HepG2 (cell line): ENCODE measurements at regions of chr1 and their contacts with region 1.

Region 1: DNA sequence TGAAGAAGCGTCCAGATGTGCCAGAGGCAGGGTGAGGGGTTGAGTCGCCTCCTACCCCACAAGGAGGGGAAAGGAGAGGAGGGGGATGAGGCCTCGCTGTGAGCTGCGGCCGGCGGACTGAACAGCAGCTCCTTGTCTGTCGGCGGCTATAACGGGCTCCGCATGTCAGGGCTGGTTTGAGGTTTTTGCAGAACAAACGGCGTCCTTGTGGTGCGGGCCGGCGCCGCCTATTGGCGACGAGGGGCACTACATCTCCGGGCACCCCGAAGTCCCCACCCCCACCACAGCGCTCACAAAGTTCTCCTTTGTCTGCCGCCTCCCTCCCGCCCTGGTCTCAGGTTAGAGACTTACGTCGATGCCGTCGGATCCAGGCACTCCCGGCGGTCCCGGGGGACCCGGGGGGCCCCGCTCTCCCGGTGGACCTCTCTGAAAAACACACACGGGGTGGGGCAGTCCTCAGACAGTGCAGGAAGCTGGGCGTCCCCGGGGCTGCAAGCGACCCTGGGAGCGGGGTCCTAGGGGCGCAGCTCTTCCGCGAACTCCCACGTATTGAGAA is 1.8 kb downstream of the COL9A2 start:
- DNase-seq: peak; percentile 83
- ATAC-seq: peak; percentile 66
- H3K4me3 ChIP-seq: peak overlapping the region; percentile 58 to 93 (median 89); a peak in 5 of 6 replicates
- H3K27ac ChIP-seq: peak overlapping the region; percentile 82
- H3K4me1 ChIP-seq: peaks cover 47% of the 10 kb centered on the region
- H3K27me3 ChIP-seq: peaks cover 0 to 11% of the 10 kb centered on the region in 2 experiments; a peak in 1 of 5 replicates
- CTCF ChIP-seq: peak; percentile 92
- EP300 ChIP-seq: peak in 1 of 2 experiments; percentile 19; a peak in 1 of 4 replicates
- POLR2A ChIP-seq: peak; percentile 75 to 76
- RAD21 ChIP-seq: peak; percentile 79

Region 2: GRCh38 chr1:40143891-40144575 is 171.3 kb before region 1 on chr1:
- CTCF ChIA-PET with region 1: no interaction called
- POLR2A ChIA-PET with region 1: no interaction called
- in situ Hi-C with region 1: no loop called
- intact Hi-C with region 1: loop called (anchors 1 kb)
- DNase-seq: peak; percentile 64
- ATAC-seq: peak; percentile 95
- H3K4me3 ChIP-seq: no peak overlapping the region
- H3K27ac ChIP-seq: no peak overlapping the region
- H3K4me1 ChIP-seq: peaks cover 19% of the 10 kb centered on the region
- H3K27me3 ChIP-seq: peaks cover 0 to 10% of the 10 kb centered on the region in 2 experiments; a peak in 2 of 5 replicates
- CTCF ChIP-seq: peak; percentile 82
- EP300 ChIP-seq: no peak
- POLR2A ChIP-seq: no peak
- RAD21 ChIP-seq: peak; percentile 65

Region 3: GRCh38 chr1:40257688-40258444 is 57.5 kb before region 1 on chr1 and contains the start of gene ZMPSTE24:
- CTCF ChIA-PET with region 1: no interaction called
- POLR2A ChIA-PET with region 1: interaction called, 13 read pairs
- in situ Hi-C with region 1: no loop called
- intact Hi-C with region 1: loop called (anchors 10 kb)
- DNase-seq: peak; percentile 95
- ATAC-seq: peak; percentile 98
- H3K4me3 ChIP-seq: peak within 1 kb of the TSS; percentile 92 to 99 (median 97)
- H3K27ac ChIP-seq: peak within 1 kb of the TSS; percentile 98
- H3K4me1 ChIP-seq: peaks cover 17% of the 10 kb centered on the region
- H3K27me3 ChIP-seq: no peaks in the 10 kb centered on the region; a peak in 1 of 5 replicates
- CTCF ChIP-seq: 0 out of 2 replicates have a peak, but pooled peaks have one; percentile 27
- EP300 ChIP-seq: peak in 1 of 2 experiments; percentile 52; a peak in 3 of 4 replicates
- POLR2A ChIP-seq: peak; percentile 74 to 81
- RAD21 ChIP-seq: peak; percentile 43
- total RNA-seq, gene ZMPSTE24: 43.1 and 60.2 TPM in 2 replicates

Region 4: GRCh38 chr1:40373338-40374283 is 58.3 kb after region 1 on chr1 and contains the start of gene SMAP2:
- CTCF ChIA-PET with region 1: no interaction called
- POLR2A ChIA-PET with region 1: interaction called, 12 read pairs
- in situ Hi-C with region 1: no loop called
- intact Hi-C with region 1: no loop called
- DNase-seq: peak; percentile 91
- ATAC-seq: peak; percentile 94
- H3K4me3 ChIP-seq: peak within 1 kb of the TSS; percentile 88 to 94 (median 93)
- H3K27ac ChIP-seq: peak within 1 kb of the TSS; percentile 76
- H3K4me1 ChIP-seq: peaks cover 37% of the 10 kb centered on the region
- H3K27me3 ChIP-seq: no peaks in the 10 kb centered on the region; a peak in 1 of 5 replicates
- CTCF ChIP-seq: no peak
- EP300 ChIP-seq: no peak
- POLR2A ChIP-seq: peak; percentile 32 to 82; a peak in 3 of 4 replicates
- RAD21 ChIP-seq: peak; percentile 35; the same call in 1 of the 2 replicates
- total RNA-seq, gene SMAP2: 19.0 and 21.2 TPM in 2 replicates

Region 5: GRCh38 chr1:40385437-40386358 is 70.4 kb after region 1 on chr1:
- CTCF ChIA-PET with region 1: no interaction called
- POLR2A ChIA-PET with region 1: interaction called, 23 read pairs
- in situ Hi-C with region 1: no loop called
- intact Hi-C with region 1: no loop called
- DNase-seq: no peak
- ATAC-seq: no peak
- H3K4me3 ChIP-seq: no peak overlapping the region
- H3K27ac ChIP-seq: peak overlapping the region; percentile 81
- H3K4me1 ChIP-seq: peaks cover 92% of the 10 kb centered on the region
- H3K27me3 ChIP-seq: no peaks in the 10 kb centered on the region
- CTCF ChIP-seq: no peak
- EP300 ChIP-seq: no peak
- POLR2A ChIP-seq: no peak
- RAD21 ChIP-seq: no peak